B cell (primary cell): ENCODE measurements at regions of chr3 and their contacts with region 1.

Region 1: GRCh38 chr3:71397046-71397445 is 186.5 kb downstream of the FOXP1 start:
- DNase-seq: peak; percentile 47
- ATAC-seq: no peak
- H3K4me3 ChIP-seq: no peak overlapping the region
- H3K4me3 Mint-ChIP-seq: peak overlapping the region; percentile 62
- H3K27ac ChIP-seq: peak overlapping the region; percentile 58 to 82
- H3K27ac Mint-ChIP-seq: no peak overlapping the region
- H3K4me1 ChIP-seq: peaks cover 69 to 88% of the 10 kb centered on the region in 2 donors
- H3K4me1 Mint-ChIP-seq: peaks cover 77% of the 10 kb centered on the region
- H3K27me3 ChIP-seq: no peaks in the 10 kb centered on the region
- H3K27me3 Mint-ChIP-seq: no peaks in the 10 kb centered on the region
- CTCF ChIP-seq: peak; percentile 44

Region 2: GRCh38 chr3:71406972-71407810 is 10.1 kb after region 1 on chr3:
- CTCF ChIA-PET with region 1: interaction called, 14 read pairs
- POLR2A ChIA-PET with region 1: no interaction called
- intact Hi-C with region 1: no loop called
- DNase-seq: no peak
- ATAC-seq: no peak
- H3K4me3 ChIP-seq: peak overlapping the region in 1 of 5 experiments; percentile 40
- H3K4me3 Mint-ChIP-seq: peak overlapping the region; percentile 71
- H3K27ac ChIP-seq: peak overlapping the region; percentile 54 to 79
- H3K27ac Mint-ChIP-seq: peak overlapping the region; percentile 85
- H3K4me1 ChIP-seq: peaks cover 55% of the 10 kb centered on the region in 2 donors
- H3K4me1 Mint-ChIP-seq: peaks cover 73% of the 10 kb centered on the region
- H3K27me3 ChIP-seq: no peaks in the 10 kb centered on the region
- H3K27me3 Mint-ChIP-seq: no peaks in the 10 kb centered on the region
- CTCF ChIP-seq: no peak

Region 3: GRCh38 chr3:71416876-71417275 is 19.8 kb after region 1 on chr3:
- CTCF ChIA-PET with region 1: interaction called, 39 read pairs
- POLR2A ChIA-PET with region 1: interaction called, 6 read pairs
- intact Hi-C with region 1: loop called (anchors 2 kb)
- DNase-seq: peak; percentile 75
- ATAC-seq: peak; percentile 50
- H3K4me3 ChIP-seq: peak overlapping the region in 1 of 5 experiments; percentile 7
- H3K4me3 Mint-ChIP-seq: peak overlapping the region; percentile 71
- H3K27ac ChIP-seq: peak overlapping the region; percentile 71 to 76
- H3K27ac Mint-ChIP-seq: peak overlapping the region; percentile 66
- H3K4me1 ChIP-seq: peaks cover 64 to 68% of the 10 kb centered on the region in 2 donors
- H3K4me1 Mint-ChIP-seq: peaks cover 78% of the 10 kb centered on the region
- H3K27me3 ChIP-seq: no peaks in the 10 kb centered on the region
- H3K27me3 Mint-ChIP-seq: no peaks in the 10 kb centered on the region
- CTCF ChIP-seq: peak; percentile 53